Transverse colon (tissue), 4 donors: ENCODE measurements at regions of chr9 and their contacts with region 1.

Region 1: GRCh38 chr9:29439961-29440360 is 1866.7 kb upstream of the C9orf72 start:
- DNase-seq: no peak
- H3K4me3 ChIP-seq: no peak overlapping the region
- H3K27ac ChIP-seq: no peak overlapping the region
- H3K4me1 ChIP-seq: no peaks in the 10 kb centered on the region
- H3K27me3 ChIP-seq: no peaks in the 10 kb centered on the region
- CTCF ChIP-seq: no peak
- EP300 ChIP-seq: no peak
- POLR2A ChIP-seq: no peak

Region 2: GRCh38 chr9:29322240-29322639 is 117.7 kb before region 1 on chr9:
- in situ Hi-C with region 1: no loop called
- intact Hi-C with region 1: no loop called
- DNase-seq: no peak
- H3K4me3 ChIP-seq: no peak overlapping the region
- H3K27ac ChIP-seq: no peak overlapping the region
- H3K4me1 ChIP-seq: no peaks in the 10 kb centered on the region
- H3K27me3 ChIP-seq: no peaks in the 10 kb centered on the region
- CTCF ChIP-seq: no peak
- EP300 ChIP-seq: no peak
- POLR2A ChIP-seq: no peak

Region 3: GRCh38 chr9:29389421-29389820 is 50.5 kb before region 1 on chr9:
- in situ Hi-C with region 1: loop called in 1 of 4 experiments (anchors 10 kb)
- intact Hi-C with region 1: no loop called
- DNase-seq: no peak
- H3K4me3 ChIP-seq: no peak overlapping the region
- H3K27ac ChIP-seq: no peak overlapping the region
- H3K4me1 ChIP-seq: no peaks in the 10 kb centered on the region
- H3K27me3 ChIP-seq: no peaks in the 10 kb centered on the region
- CTCF ChIP-seq: no peak
- EP300 ChIP-seq: no peak
- POLR2A ChIP-seq: no peak

Region 4: DNA sequence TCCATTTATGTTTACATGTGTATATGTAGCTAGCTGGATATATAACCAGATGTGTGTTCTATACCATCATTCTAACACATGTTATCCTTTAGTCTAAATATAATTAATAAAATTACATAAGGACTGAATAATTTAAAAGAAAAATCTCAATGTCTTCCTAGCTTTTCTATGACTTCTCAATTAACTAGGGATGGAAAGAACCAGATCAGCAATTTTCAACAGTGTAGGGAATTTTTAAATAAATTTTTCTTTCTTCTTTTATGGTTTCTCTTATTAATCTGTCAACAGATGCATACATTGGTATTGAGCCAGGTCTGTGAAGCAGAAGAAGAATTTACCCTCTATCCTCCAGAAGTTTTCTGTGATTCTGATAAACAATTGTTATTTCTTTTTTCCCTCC is 313.7 kb after region 1 on chr9:
- in situ Hi-C with region 1: no loop called
- intact Hi-C with region 1: no loop called
- DNase-seq: no peak
- H3K4me3 ChIP-seq: no peak overlapping the region
- H3K27ac ChIP-seq: no peak overlapping the region
- H3K4me1 ChIP-seq: no peaks in the 10 kb centered on the region
- H3K27me3 ChIP-seq: no peaks in the 10 kb centered on the region
- CTCF ChIP-seq: no peak
- EP300 ChIP-seq: no peak
- POLR2A ChIP-seq: no peak

Region 5: DNA sequence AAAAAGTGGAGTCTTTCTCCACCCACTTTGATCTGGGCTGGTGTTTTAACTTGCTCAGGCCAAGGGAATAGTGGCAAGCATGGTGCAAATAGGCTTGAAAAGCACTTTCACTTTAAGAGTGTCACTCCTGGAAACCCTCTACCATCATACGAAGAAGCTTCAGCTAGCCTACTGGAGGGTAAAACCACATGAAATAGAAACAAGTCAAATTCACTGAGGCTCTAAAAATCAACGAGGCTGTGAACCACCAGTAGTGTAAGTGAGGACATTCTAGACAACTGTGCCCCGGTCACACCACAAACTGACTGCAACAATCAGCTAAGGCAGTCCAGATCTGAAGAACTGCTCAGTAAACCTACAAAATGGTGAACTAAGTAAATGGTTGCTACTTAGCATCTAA is 499.6 kb after region 1 on chr9:
- in situ Hi-C with region 1: no loop called
- intact Hi-C with region 1: no loop called
- DNase-seq: no peak
- H3K4me3 ChIP-seq: no peak overlapping the region
- H3K27ac ChIP-seq: no peak overlapping the region
- H3K4me1 ChIP-seq: no peaks in the 10 kb centered on the region
- H3K27me3 ChIP-seq: no peaks in the 10 kb centered on the region
- CTCF ChIP-seq: no peak
- EP300 ChIP-seq: no peak
- POLR2A ChIP-seq: no peak

Region 6: DNA sequence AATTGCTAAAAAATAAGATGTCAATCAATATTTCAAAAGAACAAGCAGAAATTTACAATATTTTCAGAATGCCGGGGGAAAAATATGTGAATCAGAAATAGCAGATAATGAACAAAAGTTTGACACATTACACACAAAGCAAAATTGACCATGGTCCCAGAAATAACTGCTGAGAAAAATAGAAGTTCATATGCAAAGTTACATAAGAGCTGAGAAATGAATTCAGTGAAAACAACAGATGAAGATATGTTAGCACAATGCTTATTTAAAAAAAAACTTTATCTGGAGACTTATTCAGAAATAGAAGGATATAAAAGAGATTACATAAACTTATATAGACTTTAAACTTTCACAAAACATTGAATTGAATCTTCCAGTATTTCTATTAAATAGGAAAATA is 1460.7 kb after region 1 on chr9:
- in situ Hi-C with region 1: no loop called
- intact Hi-C with region 1: loop called (anchors 10 kb)
- DNase-seq: no peak
- H3K4me3 ChIP-seq: no peak overlapping the region
- H3K27ac ChIP-seq: no peak overlapping the region
- H3K4me1 ChIP-seq: no peaks in the 10 kb centered on the region
- H3K27me3 ChIP-seq: no peaks in the 10 kb centered on the region
- CTCF ChIP-seq: no peak
- EP300 ChIP-seq: no peak
- POLR2A ChIP-seq: no peak